HepG2 (cell line): ENCODE measurements at regions of chr5 and their contacts with region 1.

Region 1: DNA sequence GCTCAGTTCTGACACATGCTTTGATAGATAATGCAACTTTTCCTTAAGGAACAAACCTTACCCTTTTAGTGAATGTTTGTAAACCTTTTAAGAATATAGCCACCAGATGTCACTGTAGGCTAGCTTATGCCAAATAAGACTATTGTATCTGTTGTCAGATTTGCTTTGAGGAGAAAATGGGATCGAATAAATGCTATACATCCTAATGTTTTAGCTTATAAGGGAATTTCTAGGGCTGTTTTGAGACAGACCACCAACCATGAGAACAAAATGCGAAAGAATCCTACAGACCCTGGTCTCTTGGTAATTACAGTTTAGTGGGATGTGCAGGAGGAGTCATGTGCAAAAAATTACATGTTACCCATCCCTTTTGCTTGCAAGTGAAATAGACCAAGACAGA is 127.6 kb upstream of the NMUR2 start:
- DNase-seq: peak; percentile 33
- ATAC-seq: peak; percentile 70
- H3K4me3 ChIP-seq: no peak overlapping the region
- H3K27ac ChIP-seq: no peak overlapping the region
- H3K4me1 ChIP-seq: no peaks in the 10 kb centered on the region
- H3K27me3 ChIP-seq: no peaks in the 10 kb centered on the region; a peak in 2 of 5 replicates
- CTCF ChIP-seq: peak; percentile 66
- EP300 ChIP-seq: no peak
- POLR2A ChIP-seq: no peak
- RAD21 ChIP-seq: no peak

Region 2: GRCh38 chr5:152164860-152165259 is 367.9 kb before region 1 on chr5:
- CTCF ChIA-PET with region 1: no interaction called
- POLR2A ChIA-PET with region 1: no interaction called
- in situ Hi-C with region 1: no loop called
- intact Hi-C with region 1: no loop called
- DNase-seq: no peak
- ATAC-seq: peak; percentile 85
- H3K4me3 ChIP-seq: no peak overlapping the region
- H3K27ac ChIP-seq: no peak overlapping the region
- H3K4me1 ChIP-seq: no peaks in the 10 kb centered on the region
- H3K27me3 ChIP-seq: no peaks in the 10 kb centered on the region
- CTCF ChIP-seq: no peak
- EP300 ChIP-seq: no peak
- POLR2A ChIP-seq: no peak
- RAD21 ChIP-seq: no peak

Region 3: GRCh38 chr5:152551061-152551460 is 18.3 kb after region 1 on chr5:
- CTCF ChIA-PET with region 1: no interaction called
- POLR2A ChIA-PET with region 1: no interaction called
- in situ Hi-C with region 1: no loop called
- intact Hi-C with region 1: no loop called
- DNase-seq: no peak
- ATAC-seq: no peak
- H3K4me3 ChIP-seq: no peak overlapping the region
- H3K27ac ChIP-seq: no peak overlapping the region
- H3K4me1 ChIP-seq: no peaks in the 10 kb centered on the region
- H3K27me3 ChIP-seq: no peaks in the 10 kb centered on the region
- CTCF ChIP-seq: no peak
- EP300 ChIP-seq: no peak
- POLR2A ChIP-seq: no peak
- RAD21 ChIP-seq: no peak

Region 4: DNA sequence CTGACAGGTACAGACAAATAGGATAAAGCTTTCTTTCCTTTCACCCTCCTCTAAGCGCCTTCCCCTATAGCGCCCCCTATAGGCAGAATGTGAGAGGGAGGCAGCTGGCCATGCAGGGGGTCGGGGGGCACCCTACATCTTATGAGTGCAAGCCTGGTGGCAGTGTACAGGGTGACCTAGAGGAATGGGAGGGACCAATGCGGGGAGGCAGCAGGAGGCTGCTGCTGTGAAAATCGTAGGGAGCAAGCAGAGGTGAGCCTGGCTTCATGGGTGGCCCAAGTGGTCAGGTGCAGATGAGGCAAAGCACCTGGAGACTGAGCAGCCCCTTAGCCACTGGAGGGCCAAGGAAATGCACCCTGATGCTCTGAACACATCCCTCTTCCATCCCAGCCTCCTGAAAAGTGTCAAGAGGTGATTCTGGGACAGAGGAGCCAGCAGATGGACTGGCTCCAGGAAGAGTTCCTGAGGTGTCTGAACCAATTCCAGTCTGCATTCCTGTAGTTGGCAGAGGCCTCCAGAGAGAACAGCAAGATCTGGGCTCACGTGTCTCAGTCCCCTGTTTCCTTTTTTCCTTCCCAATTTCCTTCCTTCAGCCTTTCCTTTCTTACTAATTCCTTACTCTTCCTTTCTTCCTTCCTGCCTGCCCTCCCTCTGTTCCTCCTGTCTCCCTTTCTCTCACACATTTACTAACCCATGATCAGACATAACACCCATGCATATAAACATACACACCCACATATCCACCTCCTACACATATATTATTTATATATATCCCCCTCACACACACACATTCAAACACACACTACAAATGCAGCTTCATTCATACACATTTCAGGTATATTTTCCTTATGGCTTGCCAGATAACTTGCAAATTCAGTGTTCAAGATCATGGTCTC is 1625.0 kb after region 1 on chr5:
- CTCF ChIA-PET with region 1: no interaction called
- POLR2A ChIA-PET with region 1: no interaction called
- in situ Hi-C with region 1: loop called (anchors 25 kb)
- intact Hi-C with region 1: no loop called
- DNase-seq: no peak
- ATAC-seq: peak; percentile 46; the same call in 2 of the 3 replicates
- H3K4me3 ChIP-seq: no peak overlapping the region
- H3K27ac ChIP-seq: no peak overlapping the region
- H3K4me1 ChIP-seq: no peaks in the 10 kb centered on the region
- H3K27me3 ChIP-seq: peaks cover 0 to 2% of the 10 kb centered on the region in 2 experiments; a peak in 2 of 5 replicates
- CTCF ChIP-seq: peak; percentile 53
- EP300 ChIP-seq: no peak
- POLR2A ChIP-seq: no peak
- RAD21 ChIP-seq: no peak